AG04449 (cell line): ENCODE measurements at regions of chr2 and their contacts with region 1.

Region 1: DNA sequence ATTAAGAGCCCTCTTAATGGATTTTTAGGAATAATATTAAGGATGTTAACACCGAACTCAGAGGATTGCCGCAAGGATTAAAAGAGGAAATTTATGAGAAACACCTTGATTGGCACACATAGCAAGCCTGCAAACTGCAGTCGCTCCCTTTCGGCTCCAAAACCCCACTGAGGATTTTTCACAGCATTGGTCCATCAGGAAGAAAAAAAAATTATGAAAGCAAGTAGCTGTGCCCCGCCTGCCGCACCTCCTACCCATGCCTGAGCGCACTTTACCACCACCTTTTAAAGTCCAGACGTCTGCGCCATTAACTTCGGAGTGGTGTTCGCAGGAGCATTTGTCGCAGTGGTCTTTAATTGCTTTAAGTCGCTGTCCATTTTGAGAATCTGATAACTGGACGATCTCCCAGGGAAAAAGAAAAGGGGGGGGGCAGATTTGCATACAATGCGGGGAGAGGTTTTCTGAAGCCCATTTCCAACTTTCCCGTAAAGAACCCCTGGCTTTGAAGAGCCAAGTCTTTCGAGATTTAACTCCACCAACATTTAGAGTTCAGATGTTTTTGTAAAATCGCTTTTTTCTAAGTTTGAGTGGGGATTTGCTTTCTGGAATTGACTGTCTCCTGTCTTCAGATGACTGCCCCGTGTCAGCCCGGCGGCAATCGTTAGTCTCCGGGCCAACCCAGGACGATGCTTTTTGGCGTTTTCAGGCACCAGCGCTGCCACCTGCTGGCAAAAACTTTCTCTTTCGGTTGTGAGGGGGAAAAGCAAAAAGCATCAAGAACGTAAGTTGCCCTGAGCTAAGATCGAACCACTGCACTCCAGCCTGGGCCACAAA is 914 bp upstream of the TRABD2A start:
- DNase-seq: no peak
- H3K4me3 ChIP-seq: peak overlapping the region; percentile 56
- CTCF ChIP-seq: peak; percentile 85

Region 2: DNA sequence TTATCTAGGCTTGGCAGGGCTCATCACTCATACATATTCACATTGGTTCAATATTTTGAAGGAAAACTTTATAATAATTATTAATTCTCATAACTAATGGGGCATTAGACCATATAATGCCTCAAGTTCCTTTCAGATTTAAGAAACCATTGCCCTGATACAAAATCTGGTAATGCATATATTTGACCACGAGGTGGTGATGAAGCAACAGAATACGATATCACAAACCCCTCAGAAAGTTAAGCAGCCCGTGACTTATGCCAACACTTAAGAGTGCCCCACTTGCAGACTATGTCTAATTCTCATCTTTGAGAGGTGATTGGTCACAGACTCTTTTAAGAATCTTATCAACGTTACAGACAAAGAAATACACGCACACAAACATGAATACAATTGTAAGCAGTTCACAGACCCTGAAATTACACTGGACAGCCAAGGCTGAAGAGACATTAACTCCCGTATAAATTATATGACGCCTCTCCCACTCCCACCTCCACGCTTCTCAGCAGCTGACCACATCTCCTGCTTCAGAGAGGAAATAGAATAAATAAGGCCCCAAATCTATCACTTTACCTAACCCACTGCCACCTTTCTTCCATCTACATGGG is 386.2 kb before region 1 on chr2:
- CTCF ChIA-PET with region 1: interaction called, 14 read pairs
- POLR2A ChIA-PET with region 1: no interaction called
- DNase-seq: no peak
- H3K4me3 ChIP-seq: no peak overlapping the region
- CTCF ChIP-seq: peak; percentile 43

Region 3: GRCh38 chr2:84526562-84526961 is 355.2 kb before region 1 on chr2:
- CTCF ChIA-PET with region 1: interaction called, 20 read pairs
- POLR2A ChIA-PET with region 1: no interaction called
- DNase-seq: no peak
- H3K4me3 ChIP-seq: no peak overlapping the region
- CTCF ChIP-seq: no peak

Region 4: DNA sequence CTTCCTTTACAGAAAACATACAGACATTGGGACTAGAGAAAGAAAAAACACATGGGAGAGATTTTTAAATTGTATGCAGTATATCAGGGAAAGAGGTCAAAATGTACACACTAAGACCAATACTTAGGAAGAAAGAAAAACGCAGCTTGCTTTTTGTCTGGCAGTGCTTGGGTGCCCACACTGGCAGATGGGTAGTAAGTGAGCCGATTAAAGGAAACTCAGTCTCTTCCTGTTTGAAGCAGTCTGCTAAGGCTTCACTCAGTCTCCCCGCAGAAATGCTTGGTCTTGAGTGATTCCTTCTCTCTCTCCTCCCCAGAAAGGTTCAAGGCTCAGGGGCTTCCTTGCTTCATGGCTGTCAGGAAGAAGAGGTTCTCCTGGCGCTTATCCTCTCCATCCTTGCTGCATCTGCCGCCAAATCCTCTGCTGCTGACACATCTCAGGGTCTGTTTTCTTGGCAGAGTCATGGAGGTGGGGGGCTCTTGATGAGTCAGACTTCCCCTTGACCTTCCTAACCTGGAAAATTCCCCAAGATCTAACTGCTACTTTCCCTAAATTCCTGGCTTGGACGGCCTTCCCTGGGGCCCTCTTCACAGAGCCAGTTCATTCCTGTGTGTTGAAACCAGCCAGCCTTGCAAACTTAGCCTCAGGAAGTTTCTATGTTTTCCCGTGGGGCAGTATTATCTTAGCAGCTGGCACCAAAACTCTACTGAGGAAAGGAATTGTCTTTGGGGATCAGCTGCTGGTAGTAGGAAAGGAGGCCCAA is 13.1 kb after region 1 on chr2:
- CTCF ChIA-PET with region 1: interaction called, 13 read pairs
- POLR2A ChIA-PET with region 1: no interaction called
- DNase-seq: no peak
- H3K4me3 ChIP-seq: no peak overlapping the region
- CTCF ChIP-seq: no peak